ENCODE measurements at regions of chr22 and their contacts with region 1.

Region 1: GRCh38 chr22:47681411-47682165 is 919.1 kb downstream of the TBC1D22A start:
- DNase-seq: no peak

Region 2: DNA sequence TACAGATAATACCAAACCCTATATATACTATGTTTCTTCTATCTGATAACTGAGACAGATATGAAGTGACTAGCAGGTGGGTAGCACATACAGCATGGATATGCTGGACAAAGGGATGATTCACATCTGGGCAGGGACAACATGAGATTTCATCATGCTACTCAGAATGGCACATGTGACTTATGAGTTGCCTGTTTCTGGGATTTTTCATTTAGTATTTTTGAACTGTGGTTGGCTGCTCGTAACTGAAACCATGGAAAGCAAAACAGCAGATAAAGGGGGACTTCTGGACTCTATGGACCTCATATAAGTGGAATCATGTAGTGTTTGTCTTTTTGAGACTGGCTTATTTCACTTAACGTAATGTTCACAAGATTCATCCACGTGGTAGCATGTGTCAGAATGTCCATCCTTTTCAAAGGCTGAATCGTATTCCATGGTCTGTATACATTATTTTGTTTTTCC is 36.1 kb before region 1 on chr22:
- intact Hi-C with region 1: loop called in 1 of 2 experiments (anchors 1 kb)
- DNase-seq: no peak

Measured in posterior vena cava (tissue), 2 donors.